A549 (cell line): ENCODE measurements at regions of chr14 and their contacts with region 1.

Region 1: GRCh38 chr14:53953002-53953827 is 3.4 kb downstream of the BMP4 start:
- DNase-seq: peak; percentile 64 to 71
- ATAC-seq: peak; percentile 53 to 79
- H3K4me3 ChIP-seq: peak overlapping the region; percentile 53
- H3K27ac ChIP-seq: peak overlapping the region; percentile 65 to 81
- H3K4me1 ChIP-seq: peaks cover 5% of the 10 kb centered on the region; the same call in 1 of the 3 replicates
- CTCF ChIP-seq: 0 out of 3 replicates have a peak, but pooled peaks have one; percentile 6
- EP300 ChIP-seq: no peak
- POLR2A ChIP-seq: peak; percentile 72
- RAD21 ChIP-seq: no peak

Region 2: DNA sequence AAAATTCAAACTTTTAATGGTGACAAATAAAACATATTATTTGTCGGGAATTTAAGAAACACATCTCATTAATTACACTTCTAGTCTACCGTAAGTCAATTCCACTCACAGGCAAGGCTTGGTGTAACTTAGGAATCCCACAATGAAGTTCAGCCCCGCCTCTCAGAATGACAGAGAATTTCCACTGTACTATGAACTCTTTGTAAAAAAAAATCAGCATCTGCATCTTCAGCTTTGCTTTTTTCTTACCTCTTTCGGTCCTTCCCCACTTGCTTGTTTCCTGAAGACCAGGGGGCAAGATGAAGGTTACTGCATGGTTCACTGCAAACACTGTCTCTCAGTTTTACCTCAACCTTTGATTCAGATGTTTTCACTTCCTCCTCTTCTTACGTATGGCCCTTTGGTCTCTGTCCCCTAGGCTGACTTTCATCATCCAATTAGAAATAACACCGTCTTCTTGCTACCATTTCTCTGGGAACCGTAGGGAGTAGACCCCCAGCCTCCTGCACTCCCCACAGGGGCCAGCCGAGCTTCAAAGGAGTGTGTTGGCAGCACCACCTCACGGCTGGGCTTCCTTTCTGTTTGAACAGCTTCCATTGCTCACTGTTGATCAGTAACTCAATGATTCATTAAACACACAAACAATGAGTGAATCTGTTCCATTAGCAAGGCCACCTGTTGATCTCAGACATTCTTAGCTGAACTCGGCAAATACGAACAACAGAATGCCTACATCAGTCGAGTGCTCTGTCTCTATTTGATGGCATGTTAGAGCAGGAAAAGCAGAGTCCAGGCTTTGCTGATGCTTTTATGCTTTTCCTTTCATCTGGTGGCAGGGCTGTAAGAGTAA is 339.6 kb before region 1 on chr14:
- CTCF ChIA-PET with region 1: interaction called, 4 read pairs
- POLR2A ChIA-PET with region 1: interaction called, 10 read pairs
- DNase-seq: peak; percentile 89 to 97
- ATAC-seq: peak; percentile 98
- H3K4me3 ChIP-seq: peak overlapping the region; percentile 28
- H3K27ac ChIP-seq: peak overlapping the region; percentile 69 to 79
- H3K4me1 ChIP-seq: peaks cover 33% of the 10 kb centered on the region
- CTCF ChIP-seq: no peak; the same call in 2 of the 3 replicates
- EP300 ChIP-seq: peak; percentile 84 to 93; a peak in 4 of 5 replicates
- POLR2A ChIP-seq: no peak
- RAD21 ChIP-seq: peak; percentile 52 to 74

Region 3: DNA sequence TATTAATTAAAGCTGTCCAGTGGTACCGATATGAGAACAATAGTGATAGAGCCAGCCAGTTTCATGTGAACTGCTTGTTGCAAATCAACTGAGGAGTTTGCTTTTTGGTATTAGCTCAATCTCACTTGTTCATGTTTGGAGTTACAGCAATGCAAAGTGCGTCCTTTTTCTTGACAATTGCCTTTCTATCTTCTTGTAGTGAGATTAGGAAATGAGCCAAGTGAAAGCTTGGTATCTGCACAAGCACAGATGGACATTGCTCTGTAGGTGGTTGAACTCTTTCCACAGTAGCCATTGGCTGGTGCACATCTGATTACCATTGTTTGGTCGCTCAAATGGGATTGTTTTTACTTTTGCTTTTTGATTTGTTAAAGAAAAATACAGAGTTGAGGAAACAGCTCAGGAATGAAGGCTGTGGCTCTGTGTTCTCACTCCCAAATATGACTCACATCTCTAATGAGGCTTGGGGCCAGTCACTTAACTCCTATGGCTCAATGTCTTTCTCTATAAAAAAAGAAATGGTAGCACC is 238.0 kb before region 1 on chr14:
- CTCF ChIA-PET with region 1: no interaction called
- POLR2A ChIA-PET with region 1: no interaction called
- DNase-seq: peak; percentile 10 to 20
- ATAC-seq: no peak; a peak in 1 of 6 replicates
- H3K4me3 ChIP-seq: no peak overlapping the region
- H3K27ac ChIP-seq: no peak overlapping the region
- H3K4me1 ChIP-seq: peaks cover 25% of the 10 kb centered on the region
- CTCF ChIP-seq: no peak
- EP300 ChIP-seq: no peak
- POLR2A ChIP-seq: no peak
- RAD21 ChIP-seq: no peak

Region 4: DNA sequence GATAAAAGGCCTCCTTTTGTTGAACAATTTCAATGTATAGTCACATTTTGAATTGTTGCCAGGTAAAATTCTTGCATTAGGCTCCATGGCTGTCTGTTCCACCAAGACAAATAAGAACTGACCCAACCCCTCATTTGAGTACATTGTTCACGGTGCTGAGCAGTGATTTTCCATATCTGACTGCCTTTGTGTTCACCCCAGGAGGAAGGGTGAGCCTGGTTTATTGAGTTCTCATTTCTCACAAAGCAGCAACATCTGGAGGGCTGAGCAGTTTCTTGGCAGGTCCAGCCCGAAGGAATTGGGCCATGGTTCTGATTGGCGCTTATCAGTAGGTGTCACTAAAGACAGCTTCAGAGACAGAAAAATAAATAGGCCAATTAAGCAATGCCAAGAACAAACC is 145.7 kb before region 1 on chr14:
- CTCF ChIA-PET with region 1: no interaction called
- POLR2A ChIA-PET with region 1: no interaction called
- DNase-seq: peak in 1 of 2 experiments; percentile 28
- ATAC-seq: no peak
- H3K4me3 ChIP-seq: no peak overlapping the region
- H3K27ac ChIP-seq: no peak overlapping the region
- H3K4me1 ChIP-seq: peaks cover 11% of the 10 kb centered on the region; the same call in 2 of the 3 replicates
- CTCF ChIP-seq: no peak
- EP300 ChIP-seq: no peak
- POLR2A ChIP-seq: no peak
- RAD21 ChIP-seq: no peak

Region 5: DNA sequence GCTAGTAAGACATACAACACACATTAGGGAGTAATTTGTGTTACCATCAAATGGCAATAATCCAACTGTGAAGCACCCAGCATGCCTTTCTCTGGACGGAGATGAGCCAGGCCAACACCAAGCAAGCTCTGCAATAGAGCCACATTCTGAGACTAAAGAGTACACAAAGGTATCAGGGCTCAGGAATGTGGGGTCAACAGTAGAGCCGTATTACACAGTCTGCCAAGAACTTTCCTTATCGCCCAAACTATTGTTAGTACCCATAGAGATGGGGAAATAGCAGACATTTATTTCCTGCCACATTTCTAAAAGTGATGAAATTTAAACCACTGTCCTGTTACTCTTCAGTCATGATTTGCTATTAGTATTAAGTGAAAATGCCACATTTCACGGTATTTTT is 110.3 kb before region 1 on chr14:
- CTCF ChIA-PET with region 1: no interaction called
- POLR2A ChIA-PET with region 1: interaction called, 12 read pairs
- DNase-seq: peak; percentile 50 to 91
- ATAC-seq: peak; percentile 83 to 95
- H3K4me3 ChIP-seq: no peak overlapping the region
- H3K27ac ChIP-seq: peak overlapping the region; percentile 76 to 81
- H3K4me1 ChIP-seq: peaks cover 63% of the 10 kb centered on the region
- CTCF ChIP-seq: no peak
- EP300 ChIP-seq: peak; percentile 62 to 81; a peak in 3 of 5 replicates
- POLR2A ChIP-seq: no peak
- RAD21 ChIP-seq: peak; percentile 18 to 53; a peak in 3 of 5 replicates